Caco-2 (cell line): ENCODE measurements at regions of chr3 and their contacts with region 1.

Region 1: DNA sequence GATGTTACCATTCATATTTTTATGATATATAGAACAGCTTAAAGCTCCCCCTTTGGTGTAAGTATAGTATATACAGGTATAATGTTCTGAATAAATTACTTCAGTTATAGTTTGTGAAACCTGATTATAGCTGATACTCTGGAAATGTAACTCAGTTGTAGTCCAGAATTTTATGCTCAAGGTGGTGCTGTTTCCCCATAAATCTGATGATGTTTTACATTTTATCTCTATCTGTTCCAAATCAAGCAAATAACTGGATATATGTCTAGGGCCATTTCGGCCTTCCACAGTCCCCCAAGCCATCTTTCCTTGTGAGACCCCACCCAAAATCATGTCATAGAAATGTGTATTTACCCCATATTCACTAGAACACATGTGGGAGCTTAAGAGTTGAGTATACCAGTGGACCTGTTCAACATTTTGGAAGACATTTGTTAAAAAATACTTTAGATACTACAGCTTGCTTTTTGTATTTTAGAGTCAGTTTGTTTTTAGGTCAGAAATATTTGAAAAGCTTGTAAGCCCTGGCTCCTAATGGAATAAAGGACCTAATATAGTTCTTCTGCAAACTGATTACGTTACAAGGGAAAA is 107.1 kb downstream of the ATG7 start:
- DNase-seq: peak in 1 of 2 experiments; percentile 48
- H3K4me3 ChIP-seq: no peak overlapping the region
- H3K4me3 Mint-ChIP-seq: no peak overlapping the region
- H3K27ac Mint-ChIP-seq: peak overlapping the region; percentile 48
- H3K4me1 ChIP-seq: peaks cover 21% of the 10 kb centered on the region
- H3K4me1 Mint-ChIP-seq: peaks cover 20% of the 10 kb centered on the region
- H3K27me3 ChIP-seq: no peaks in the 10 kb centered on the region
- H3K27me3 Mint-ChIP-seq: no peaks in the 10 kb centered on the region
- CTCF ChIP-seq: peak; percentile 34 to 54

Region 2: GRCh38 chr3:10867384-10867783 is 511.9 kb before region 1 on chr3:
- CTCF ChIA-PET with region 1: no interaction called
- POLR2A ChIA-PET with region 1: no interaction called
- intact Hi-C with region 1: no loop called
- DNase-seq: peak in 1 of 2 experiments; percentile 43
- H3K4me3 ChIP-seq: no peak overlapping the region
- H3K4me3 Mint-ChIP-seq: no peak overlapping the region
- H3K27ac Mint-ChIP-seq: no peak overlapping the region
- H3K4me1 ChIP-seq: no peaks in the 10 kb centered on the region
- H3K4me1 Mint-ChIP-seq: no peaks in the 10 kb centered on the region
- H3K27me3 ChIP-seq: 0 out of 2 replicates have a peak, but pooled peaks cover 1% of the 10 kb centered on the region
- H3K27me3 Mint-ChIP-seq: peaks cover 12% of the 10 kb centered on the region
- CTCF ChIP-seq: no peak

Region 3: DNA sequence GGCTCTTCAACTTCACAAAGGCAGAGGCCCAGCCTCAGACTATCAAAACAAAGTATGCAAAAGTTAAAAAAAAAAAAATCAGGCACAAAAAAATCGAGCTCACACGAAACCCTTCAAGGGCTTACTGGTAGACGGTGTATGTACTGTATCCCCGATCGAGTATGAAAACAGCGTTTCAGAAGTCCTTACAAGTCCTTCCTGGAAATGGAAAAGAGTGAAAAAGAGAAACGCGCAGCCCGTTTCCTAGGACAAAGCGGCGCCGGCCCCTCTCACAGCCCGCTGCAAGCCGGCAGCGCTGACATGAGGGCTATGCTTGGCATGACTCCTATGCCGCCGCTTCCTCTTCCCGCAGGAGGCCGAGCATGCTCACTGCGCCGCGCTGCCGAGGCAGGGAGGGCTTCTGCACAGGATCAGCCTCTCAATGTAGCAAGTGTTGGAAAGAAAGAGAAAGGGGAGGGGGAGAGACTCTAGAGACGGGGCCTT is 264.3 kb after region 1 on chr3 and contains the start of gene VGLL4:
- CTCF ChIA-PET with region 1: interaction called, 12 read pairs
- POLR2A ChIA-PET with region 1: interaction called, 5 read pairs
- intact Hi-C with region 1: no loop called
- DNase-seq: peak; percentile 81 to 84
- H3K4me3 ChIP-seq: peak within 1 kb of the TSS; percentile 77
- H3K4me3 Mint-ChIP-seq: peak within 1 kb of the TSS; percentile 72
- H3K27ac Mint-ChIP-seq: peak within 1 kb of the TSS; percentile 69
- H3K4me1 ChIP-seq: 0 out of 2 replicates have a peak, but pooled peaks cover 4% of the 10 kb centered on the region
- H3K4me1 Mint-ChIP-seq: peaks cover 8% of the 10 kb centered on the region
- H3K27me3 ChIP-seq: no peaks in the 10 kb centered on the region
- H3K27me3 Mint-ChIP-seq: no peaks in the 10 kb centered on the region
- CTCF ChIP-seq: peak in 1 of 2 experiments; percentile 24
- total RNA-seq, gene VGLL4: 42.8 and 46.1 TPM in 2 replicates

Region 4: DNA sequence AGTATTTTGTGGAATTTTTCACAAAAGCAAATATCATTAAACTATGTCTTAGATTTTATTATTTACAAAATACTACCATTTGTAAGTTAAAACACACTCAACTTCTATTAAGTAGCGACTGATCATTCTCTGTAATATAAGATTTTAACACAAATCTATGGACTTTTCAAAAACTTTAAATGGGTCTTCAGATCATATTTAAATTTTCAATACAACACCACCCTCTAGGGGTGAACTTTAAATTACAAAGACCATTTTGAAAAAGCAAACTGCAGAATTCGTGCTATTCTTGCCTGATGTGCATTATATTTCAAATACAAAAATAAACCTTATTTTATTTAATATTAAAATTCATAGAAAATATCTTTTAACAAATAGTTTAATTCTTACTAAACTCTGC is 272.6 kb after region 1 on chr3:
- CTCF ChIA-PET with region 1: no interaction called
- POLR2A ChIA-PET with region 1: no interaction called
- intact Hi-C with region 1: loop called (anchors 1 kb)
- DNase-seq: peak in 1 of 2 experiments; percentile 23
- H3K4me3 ChIP-seq: no peak overlapping the region
- H3K4me3 Mint-ChIP-seq: no peak overlapping the region
- H3K27ac Mint-ChIP-seq: no peak overlapping the region
- H3K4me1 ChIP-seq: peaks cover 11% of the 10 kb centered on the region
- H3K4me1 Mint-ChIP-seq: peaks cover 11% of the 10 kb centered on the region
- H3K27me3 ChIP-seq: no peaks in the 10 kb centered on the region
- H3K27me3 Mint-ChIP-seq: no peaks in the 10 kb centered on the region
- CTCF ChIP-seq: peak; percentile 24 to 46

Region 5: DNA sequence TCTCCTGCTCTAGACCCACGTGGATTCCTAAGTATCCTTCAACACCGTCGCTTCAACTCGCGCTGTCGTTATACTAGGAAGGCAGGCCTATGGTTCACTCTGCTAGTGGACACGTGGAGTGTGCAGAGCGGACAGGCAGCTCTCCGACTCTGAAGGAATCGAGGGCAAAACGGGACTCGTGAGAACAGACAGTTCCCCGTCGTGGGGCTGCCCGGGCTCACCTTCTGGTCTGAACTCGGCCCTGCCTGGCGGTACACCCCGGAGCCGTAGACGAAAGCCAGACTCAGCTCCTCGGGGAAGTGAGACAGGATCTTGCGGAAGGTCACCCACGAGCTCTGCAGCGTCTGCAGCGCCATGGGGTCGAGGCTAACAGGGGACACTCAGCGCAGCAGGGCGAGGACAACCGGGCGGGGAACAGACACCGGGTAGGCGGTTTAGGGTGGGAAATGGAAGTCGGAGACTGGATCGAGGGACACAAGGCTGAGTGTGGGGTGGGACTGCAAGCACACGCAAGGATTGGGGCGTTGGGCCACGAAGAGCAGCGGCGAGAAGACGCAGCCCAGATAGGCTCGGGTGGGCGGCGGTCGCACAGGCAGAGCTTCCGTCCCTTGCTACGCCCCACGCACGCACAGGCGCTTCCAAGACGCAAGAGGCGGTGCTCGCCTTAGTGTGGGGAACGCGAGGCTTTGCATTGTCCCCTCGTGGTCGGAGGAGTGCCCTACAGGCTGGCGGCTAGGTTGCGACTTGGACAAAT is 467.1 kb after region 1 on chr3 and contains the start of gene TAMM41:
- CTCF ChIA-PET with region 1: no interaction called
- POLR2A ChIA-PET with region 1: no interaction called
- intact Hi-C with region 1: loop called (anchors 5 kb)
- DNase-seq: peak; percentile 86 to 89
- H3K4me3 ChIP-seq: peak within 1 kb of the TSS; percentile 89
- H3K4me3 Mint-ChIP-seq: peak within 1 kb of the TSS; percentile 100
- H3K27ac Mint-ChIP-seq: peak within 1 kb of the TSS; percentile 97
- H3K4me1 ChIP-seq: peaks cover 5% of the 10 kb centered on the region; the same call in 1 of the 2 replicates
- H3K4me1 Mint-ChIP-seq: peaks cover 8% of the 10 kb centered on the region
- H3K27me3 ChIP-seq: no peaks in the 10 kb centered on the region
- H3K27me3 Mint-ChIP-seq: peaks cover 4% of the 10 kb centered on the region
- CTCF ChIP-seq: peak; percentile 72 to 85
- total RNA-seq, gene TAMM41: 19.7 and 22.4 TPM in 2 replicates

Region 6: GRCh38 chr3:12175844-12176453 is 796.6 kb after region 1 on chr3:
- CTCF ChIA-PET with region 1: no interaction called
- POLR2A ChIA-PET with region 1: no interaction called
- intact Hi-C with region 1: loop called (anchors 5 kb)
- DNase-seq: peak; percentile 56 to 69
- H3K4me3 ChIP-seq: no peak overlapping the region
- H3K4me3 Mint-ChIP-seq: no peak overlapping the region
- H3K27ac Mint-ChIP-seq: no peak overlapping the region
- H3K4me1 ChIP-seq: peaks cover 3% of the 10 kb centered on the region; the same call in 1 of the 2 replicates
- H3K4me1 Mint-ChIP-seq: no peaks in the 10 kb centered on the region
- H3K27me3 ChIP-seq: no peaks in the 10 kb centered on the region
- H3K27me3 Mint-ChIP-seq: no peaks in the 10 kb centered on the region
- CTCF ChIP-seq: peak; percentile 82 to 85